Activated T-helper 1 cell treated with anti-CD3 and anti-CD28 coated beads, Interleukin-12 subunit alpha, Interleukin-12 subunit beta, Interleukin-2, Interleukin-4 antibody, amounts not matched to agents 30 ng/mL and 10 ng/mL and 1 ng/mL, durations not matched to agents 14 hours and 24 hours and 36 hours (primary cell): ENCODE measurements at regions of chrX and their contacts with region 1.

Region 1: DNA sequence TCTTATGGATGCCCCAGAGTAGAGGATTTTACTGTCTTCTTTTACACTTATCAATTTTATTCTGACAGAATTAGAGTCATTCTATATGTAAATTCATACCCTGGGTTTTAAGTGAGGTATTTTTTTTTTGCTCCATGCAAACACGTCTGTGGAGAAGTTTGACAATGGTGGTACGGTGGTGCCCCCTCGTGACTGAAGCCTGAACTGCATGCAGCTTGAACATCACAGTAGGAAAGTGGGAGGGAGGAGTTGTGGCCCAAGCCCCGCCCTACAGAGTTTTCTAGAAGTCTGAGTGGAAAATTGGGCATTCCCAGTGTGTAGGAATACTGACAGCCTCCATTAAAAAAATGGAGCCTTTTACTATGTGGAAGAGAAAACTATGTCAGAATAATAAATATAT is 73.3 kb upstream of the RAB40AL start:
- DNase-seq: peak; percentile 57
- H3K4me3 Mint-ChIP-seq: no peak overlapping the region
- H3K27ac Mint-ChIP-seq: no peak overlapping the region
- H3K4me1 Mint-ChIP-seq: no peaks in the 10 kb centered on the region
- H3K27me3 Mint-ChIP-seq: no peaks in the 10 kb centered on the region

Region 2: GRCh38 chrX:102515975-102516941 is 347.5 kb before region 1 on chrX and contains the start of gene TMSB15A:
- intact Hi-C with region 1: loop called (anchors 5 kb)
- DNase-seq: peak; percentile 8
- H3K4me3 Mint-ChIP-seq: peak within 1 kb of the TSS; percentile 77
- H3K27ac Mint-ChIP-seq: no peak within 1 kb of the TSS
- H3K4me1 Mint-ChIP-seq: peaks cover 16% of the 10 kb centered on the region
- H3K27me3 Mint-ChIP-seq: peaks cover 23% of the 10 kb centered on the region
- total RNA-seq, gene TMSB15A: not detected in 2 replicates

Region 3: DNA sequence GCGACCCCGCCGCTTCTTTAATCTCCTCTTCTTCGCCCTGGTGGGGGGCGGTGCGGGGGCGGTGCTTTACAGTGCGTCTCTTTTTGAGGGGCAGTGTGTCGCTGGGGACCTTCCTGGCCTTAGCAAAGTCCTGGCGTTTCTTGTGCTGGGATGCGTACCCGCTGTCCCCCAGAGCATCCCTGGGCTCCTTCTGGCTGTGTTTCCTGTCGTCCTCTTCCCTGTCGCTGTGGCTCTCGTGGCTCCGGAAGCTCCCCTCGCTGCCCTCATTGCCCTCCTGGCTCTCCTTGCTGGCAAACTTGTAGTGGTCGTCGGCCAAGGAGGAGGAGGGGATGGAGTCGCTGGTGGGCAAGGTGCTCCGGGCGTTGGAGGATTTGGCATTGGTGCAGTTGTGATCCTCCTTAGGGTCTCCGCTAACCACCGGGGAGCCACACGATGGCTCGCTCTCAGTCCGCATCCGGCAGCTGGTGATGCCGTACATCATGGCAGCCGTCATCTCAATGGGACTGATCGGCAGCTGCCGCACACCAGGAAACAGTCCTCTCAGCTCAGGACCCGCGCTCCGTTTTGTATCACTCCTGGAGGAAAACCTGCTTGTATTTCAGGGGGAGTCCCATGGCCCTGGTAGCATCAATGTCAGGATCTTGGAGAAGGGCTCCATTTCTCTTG is 316.8 kb before region 1 on chrX:
- intact Hi-C with region 1: loop called (anchors 10 kb)
- DNase-seq: peak; percentile 0
- H3K4me3 Mint-ChIP-seq: peak overlapping the region; percentile 86
- H3K27ac Mint-ChIP-seq: peak overlapping the region; percentile 34
- H3K4me1 Mint-ChIP-seq: no peaks in the 10 kb centered on the region
- H3K27me3 Mint-ChIP-seq: peaks cover 3% of the 10 kb centered on the region

Region 4: GRCh38 chrX:102659790-102660757 is 203.7 kb before region 1 on chrX:
- intact Hi-C with region 1: loop called (anchors 10 kb)
- DNase-seq: peak; percentile 68
- H3K4me3 Mint-ChIP-seq: peak overlapping the region; percentile 92
- H3K27ac Mint-ChIP-seq: peak overlapping the region; percentile 76
- H3K4me1 Mint-ChIP-seq: peaks cover 8% of the 10 kb centered on the region
- H3K27me3 Mint-ChIP-seq: peaks cover 6% of the 10 kb centered on the region

Region 5: DNA sequence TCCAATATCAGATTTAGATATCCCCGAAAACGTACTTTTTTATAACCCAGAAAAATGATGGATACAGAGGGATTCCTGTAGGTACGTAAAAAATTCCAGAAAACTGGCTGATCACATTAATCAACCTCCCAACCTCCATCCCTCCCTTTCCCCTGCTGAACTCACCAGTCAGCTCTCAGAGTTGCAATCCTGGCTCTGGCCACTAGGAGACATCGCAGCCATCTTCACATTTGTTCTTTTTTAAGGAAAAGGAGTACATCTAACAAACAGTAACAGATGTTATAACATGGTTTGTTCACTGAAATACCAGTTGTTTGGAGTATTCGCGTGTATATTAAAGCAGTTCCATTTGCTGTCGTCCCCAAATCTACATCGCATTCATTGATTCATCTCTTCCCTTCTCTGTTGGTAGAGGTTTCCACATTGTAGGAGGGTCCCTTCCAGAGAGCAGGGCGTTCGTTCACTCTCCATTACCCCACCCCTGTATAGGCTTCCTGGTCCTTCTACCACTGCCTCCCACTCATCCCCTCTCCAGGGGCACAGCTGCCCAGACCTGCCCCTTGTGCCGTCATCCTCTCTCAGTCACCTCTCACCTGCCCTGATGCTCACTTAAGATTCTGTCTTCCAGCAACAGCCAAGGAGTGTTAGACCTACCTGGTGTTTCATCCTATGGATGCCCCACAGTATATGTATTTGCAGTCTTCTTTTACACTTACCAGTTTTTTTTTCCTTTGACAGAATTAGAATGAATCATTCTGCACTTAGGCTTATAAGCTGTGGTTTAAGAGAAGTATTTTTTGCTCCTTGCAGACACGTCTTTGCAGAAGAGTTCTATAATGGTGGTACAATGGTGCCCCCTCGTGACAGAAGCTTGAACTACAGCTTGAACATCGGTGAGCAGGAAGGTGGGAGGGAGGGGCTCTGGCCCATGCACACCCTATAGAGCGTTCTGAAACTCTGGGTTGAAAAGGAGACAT is 36.5 kb after region 1 on chrX:
- intact Hi-C with region 1: loop called (anchors 2 kb)
- DNase-seq: peak; percentile 43
- H3K4me3 Mint-ChIP-seq: no peak overlapping the region
- H3K27ac Mint-ChIP-seq: no peak overlapping the region
- H3K4me1 Mint-ChIP-seq: peaks cover 9% of the 10 kb centered on the region
- H3K27me3 Mint-ChIP-seq: no peaks in the 10 kb centered on the region